Activated CD4-positive, alpha-beta T cell treated with anti-CD3 and anti-CD28 coated beads, Interleukin-2, amount 10 ng/mL, durations not matched to agents 24 days and 14 days (primary cell): ENCODE measurements at regions of chr1 and their contacts with region 1.

Region 1: DNA sequence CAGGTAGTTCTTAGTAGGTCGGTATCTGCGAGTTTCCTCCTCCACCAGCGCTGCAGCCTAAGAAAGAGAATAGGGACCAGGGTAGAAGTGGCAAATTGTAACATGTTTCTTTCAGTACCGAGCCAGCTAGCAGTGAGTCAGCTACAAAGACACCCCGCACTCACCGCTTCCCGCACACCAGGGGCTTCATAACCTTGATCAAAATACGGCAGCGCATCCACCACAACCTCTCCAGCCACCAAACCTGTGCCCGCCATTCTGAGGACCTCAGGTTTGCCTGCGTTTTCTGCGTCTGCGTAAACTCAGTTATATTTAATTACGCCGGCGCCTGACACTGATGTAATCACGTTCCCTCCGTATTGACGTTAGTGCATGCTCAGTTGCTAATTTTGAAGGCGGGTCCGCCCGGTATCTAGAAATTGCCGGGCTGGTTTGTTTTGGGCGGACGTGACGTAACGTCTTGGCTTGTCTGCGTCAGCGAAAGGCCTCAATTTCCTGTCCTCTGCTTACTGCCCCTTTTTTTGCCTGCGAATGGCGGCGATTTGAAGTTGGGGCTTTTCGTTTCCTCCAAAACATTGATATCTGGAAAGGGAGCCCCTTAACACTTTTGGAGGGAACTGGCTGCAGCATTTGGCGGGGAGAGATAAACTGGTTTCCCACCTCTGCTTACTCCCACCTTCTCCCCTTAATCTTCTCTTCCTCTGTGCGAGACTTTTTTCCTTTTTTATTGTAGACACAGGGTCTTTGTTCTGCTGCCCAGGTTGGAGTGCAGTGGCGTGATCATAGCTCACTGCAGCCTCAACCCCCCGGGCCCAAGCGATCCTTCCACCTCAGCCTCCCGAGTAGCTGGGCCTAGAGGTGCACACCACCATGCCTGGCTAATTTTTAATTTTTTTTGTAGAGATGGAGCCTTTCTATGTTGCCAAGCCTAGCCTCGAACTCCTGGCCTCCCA is at the start of gene BCAS2:
- DNase-seq: peak; percentile 98
- H3K4me3 Mint-ChIP-seq: peak within 1 kb of the TSS; percentile 95
- H3K27ac Mint-ChIP-seq: peak within 1 kb of the TSS; percentile 93
- H3K4me1 Mint-ChIP-seq: peaks cover 19% of the 10 kb centered on the region
- H3K27me3 Mint-ChIP-seq: peaks cover 9% of the 10 kb centered on the region
- total RNA-seq, gene BCAS2: 63.5 and 64.0 TPM in 2 replicates

Region 2: GRCh38 chr1:114670083-114671010 is 88.7 kb after region 1 on chr1:
- intact Hi-C with region 1: loop called (anchors 2 kb)
- DNase-seq: peak; percentile 94
- H3K4me3 Mint-ChIP-seq: peak overlapping the region; percentile 94
- H3K27ac Mint-ChIP-seq: peak overlapping the region; percentile 25
- H3K4me1 Mint-ChIP-seq: peaks cover 10% of the 10 kb centered on the region
- H3K27me3 Mint-ChIP-seq: peaks cover 52% of the 10 kb centered on the region

Region 3: GRCh38 chr1:114780344-114781226 is 199.0 kb after region 1 on chr1 and contains the start of gene SIKE1:
- intact Hi-C with region 1: loop called (anchors 10 kb)
- DNase-seq: peak; percentile 98
- H3K4me3 Mint-ChIP-seq: peak within 1 kb of the TSS; percentile 100
- H3K27ac Mint-ChIP-seq: peak within 1 kb of the TSS; percentile 99
- H3K4me1 Mint-ChIP-seq: peaks cover 18% of the 10 kb centered on the region
- H3K27me3 Mint-ChIP-seq: peaks cover 8% of the 10 kb centered on the region
- total RNA-seq, gene SIKE1: 64.4 and 65.8 TPM in 2 replicates